ENCODE measurements at regions of chr1 and their contacts with region 1.

Region 1: GRCh38 chr1:171644805-171645483 is 7.5 kb downstream of the MYOC start:
- DNase-seq: peak; percentile 100
- ATAC-seq: peak; percentile 89
- H3K4me3 ChIP-seq: no peak overlapping the region
- H3K27ac ChIP-seq: no peak overlapping the region
- H3K4me1 ChIP-seq: no peaks in the 10 kb centered on the region
- H3K27me3 ChIP-seq: peaks cover 11% of the 10 kb centered on the region
- CTCF ChIP-seq: peak; percentile 99

Region 2: GRCh38 chr1:171707583-171707982 is 62.6 kb after region 1 on chr1:
- CTCF ChIA-PET with region 1: interaction called, 9 read pairs
- POLR2A ChIA-PET with region 1: no interaction called
- intact Hi-C with region 1: loop called (anchors 2 kb)
- DNase-seq: peak; percentile 76
- ATAC-seq: peak; percentile 98
- H3K4me3 ChIP-seq: no peak overlapping the region
- H3K27ac ChIP-seq: peak overlapping the region; percentile 25
- H3K4me1 ChIP-seq: peaks cover 10% of the 10 kb centered on the region
- H3K27me3 ChIP-seq: no peaks in the 10 kb centered on the region
- CTCF ChIP-seq: no peak

Region 3: DNA sequence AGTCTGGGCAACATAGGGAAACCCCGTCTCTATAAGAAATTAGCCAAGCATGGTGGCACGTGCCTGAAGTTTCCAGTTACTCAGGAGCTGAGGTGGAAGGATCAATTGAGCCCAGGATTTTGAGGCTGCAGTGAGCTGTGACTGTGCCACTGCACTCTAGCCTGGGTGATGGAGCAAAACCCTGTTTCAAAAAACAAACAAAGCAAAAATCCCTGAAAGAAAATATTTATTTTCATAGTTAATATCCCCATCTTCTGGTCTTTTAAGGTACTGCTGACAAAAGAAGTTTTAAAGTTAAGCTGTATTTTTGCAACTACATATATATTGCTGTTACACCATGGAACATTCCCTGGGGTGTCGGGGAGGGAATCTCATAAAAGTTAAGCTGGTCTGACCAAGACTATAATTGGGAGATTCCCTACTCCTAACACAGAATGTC is 70.9 kb after region 1 on chr1:
- CTCF ChIA-PET with region 1: interaction called, 75 read pairs
- POLR2A ChIA-PET with region 1: no interaction called
- intact Hi-C with region 1: loop called (anchors 1 kb)
- DNase-seq: peak; percentile 82
- ATAC-seq: peak; percentile 58
- H3K4me3 ChIP-seq: no peak overlapping the region
- H3K27ac ChIP-seq: no peak overlapping the region
- H3K4me1 ChIP-seq: no peaks in the 10 kb centered on the region
- H3K27me3 ChIP-seq: no peaks in the 10 kb centered on the region
- CTCF ChIP-seq: peak; percentile 94

Region 4: GRCh38 chr1:171741872-171742576 is 97.1 kb after region 1 on chr1 and contains the start of gene VAMP4:
- CTCF ChIA-PET with region 1: interaction called, 10 read pairs
- POLR2A ChIA-PET with region 1: interaction called, 3 read pairs
- intact Hi-C with region 1: loop called (anchors 1 kb)
- DNase-seq: peak; percentile 99
- ATAC-seq: peak; percentile 81
- H3K4me3 ChIP-seq: peak within 1 kb of the TSS; percentile 75
- H3K27ac ChIP-seq: peak within 1 kb of the TSS; percentile 74
- H3K4me1 ChIP-seq: peaks cover 40% of the 10 kb centered on the region
- H3K27me3 ChIP-seq: no peaks in the 10 kb centered on the region
- CTCF ChIP-seq: no peak
- total RNA-seq, gene VAMP4: 5.2 and 7.2 TPM in 2 replicates

Region 5: DNA sequence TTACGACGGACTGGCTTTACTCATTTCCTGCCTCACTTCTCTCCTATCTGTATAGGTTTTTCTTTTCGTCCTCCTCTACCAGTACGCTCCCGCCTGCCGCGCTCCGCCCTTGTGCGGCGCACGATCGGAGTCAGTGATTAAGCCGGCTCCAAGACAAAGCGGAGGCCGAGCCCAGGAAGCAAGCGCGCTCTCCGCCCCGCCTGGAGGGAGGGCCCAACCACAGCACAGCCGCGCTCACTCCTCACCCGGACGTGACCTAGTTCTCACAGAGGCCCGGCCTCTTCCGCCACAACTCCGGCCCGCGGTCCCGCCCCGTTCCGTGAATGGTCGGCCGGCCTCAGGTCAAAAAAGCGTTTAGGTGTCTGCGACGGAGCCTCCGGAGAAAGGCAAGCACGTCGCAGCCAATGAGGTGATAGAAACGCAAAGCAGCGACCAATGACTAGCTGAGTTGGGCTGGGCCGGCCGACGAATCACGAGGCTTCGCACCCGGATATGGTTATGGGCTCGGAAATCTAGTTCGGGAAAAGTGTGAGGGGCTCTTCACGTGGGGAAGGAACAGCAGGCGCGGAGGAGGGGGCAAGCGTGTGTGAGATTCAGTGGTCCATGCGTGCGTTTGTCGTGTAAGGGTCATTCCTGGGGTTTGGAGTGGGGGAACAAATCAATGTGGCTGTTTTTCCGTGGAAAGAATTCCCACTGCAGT is 136.4 kb after region 1 on chr1 and contains the start of gene METTL13:
- CTCF ChIA-PET with region 1: interaction called, 13 read pairs
- POLR2A ChIA-PET with region 1: no interaction called
- intact Hi-C with region 1: loop called (anchors 1 kb)
- DNase-seq: peak; percentile 100
- ATAC-seq: peak; percentile 97
- H3K4me3 ChIP-seq: peak within 1 kb of the TSS; percentile 75
- H3K27ac ChIP-seq: peak within 1 kb of the TSS; percentile 61
- H3K4me1 ChIP-seq: peaks cover 39% of the 10 kb centered on the region
- H3K27me3 ChIP-seq: no peaks in the 10 kb centered on the region
- CTCF ChIP-seq: no peak
- total RNA-seq, gene METTL13: 115 and 138 TPM in 2 replicates

Region 6: GRCh38 chr1:171801487-171801891 is 156.5 kb after region 1 on chr1:
- CTCF ChIA-PET with region 1: interaction called, 25 read pairs
- POLR2A ChIA-PET with region 1: no interaction called
- intact Hi-C with region 1: loop called (anchors 1 kb)
- DNase-seq: peak; percentile 88
- ATAC-seq: peak; percentile 74
- H3K4me3 ChIP-seq: no peak overlapping the region
- H3K27ac ChIP-seq: no peak overlapping the region
- H3K4me1 ChIP-seq: no peaks in the 10 kb centered on the region
- H3K27me3 ChIP-seq: no peaks in the 10 kb centered on the region
- CTCF ChIP-seq: peak; percentile 99

Region 7: DNA sequence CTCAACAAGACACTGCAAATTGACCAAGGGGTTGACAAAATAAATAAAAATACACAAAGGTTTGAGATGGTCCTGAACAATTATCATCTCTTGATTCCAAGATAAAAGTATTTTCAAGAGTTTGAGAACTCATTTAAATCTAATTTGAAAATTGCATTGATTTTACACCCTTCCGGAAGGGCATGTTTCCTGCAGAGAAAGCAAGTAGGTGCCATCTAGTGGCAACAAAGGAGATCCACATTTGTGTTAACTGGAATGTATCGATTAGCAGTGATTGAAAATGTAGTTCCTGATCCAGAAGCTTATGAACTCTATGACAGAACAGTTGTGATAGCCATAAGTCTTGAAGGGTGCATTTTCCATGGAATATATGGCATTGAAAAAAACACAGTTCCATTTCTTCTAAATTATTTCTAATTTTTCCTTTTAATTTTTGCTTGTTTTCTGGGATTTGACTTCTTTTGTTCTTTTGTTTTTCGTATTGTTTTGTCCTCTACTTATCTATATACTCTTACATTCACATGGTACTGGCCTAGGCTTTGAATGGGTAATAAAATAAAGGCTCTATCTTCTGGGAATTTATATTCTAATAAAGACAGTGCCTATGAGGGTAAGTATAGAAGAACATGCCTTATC is 340.0 kb after region 1 on chr1:
- CTCF ChIA-PET with region 1: interaction called, 6 read pairs
- POLR2A ChIA-PET with region 1: no interaction called
- intact Hi-C with region 1: loop called (anchors 1 kb)
- DNase-seq: peak; percentile 78
- ATAC-seq: peak; percentile 54
- H3K4me3 ChIP-seq: no peak overlapping the region
- H3K27ac ChIP-seq: no peak overlapping the region
- H3K4me1 ChIP-seq: no peaks in the 10 kb centered on the region
- H3K27me3 ChIP-seq: peaks cover 32% of the 10 kb centered on the region
- CTCF ChIP-seq: peak; percentile 99